Heart left ventricle (tissue), 16 donors: ENCODE measurements at regions of chr11 and their contacts with region 1.

Region 1: GRCh38 chr11:58513747-58514367 is 6.0 kb upstream of the OR5B21 start:
- DNase-seq: no peak
- ATAC-seq: peak in 3 of 4 donors; percentile 65 to 74 (median 73)
- H3K4me3 ChIP-seq: no peak overlapping the region
- H3K27ac ChIP-seq: no peak overlapping the region
- H3K4me1 ChIP-seq: peaks cover 0 to 3% (median 0%) of the 10 kb centered on the region in 12 donors
- H3K27me3 ChIP-seq: peaks cover 0 to 5% (median 0%) of the 10 kb centered on the region in 9 donors
- CTCF ChIP-seq: peak; percentile 42 to 76 (median 68)
- POLR2A ChIP-seq: no peak

Region 2: GRCh38 chr11:57567515-57568329 is 946.1 kb before region 1 on chr11 and contains the start of gene UBE2L6:
- intact Hi-C with region 1: loop called in 1 of 10 experiments (anchors 10 kb)
- DNase-seq: peak; percentile 56 to 90 (median 85)
- ATAC-seq: peak in 3 of 4 donors; percentile 80 to 87 (median 85)
- H3K4me3 ChIP-seq: peak within 1 kb of the TSS; percentile 57 to 96 (median 78)
- H3K27ac ChIP-seq: peak within 1 kb of the TSS; percentile 61 to 94 (median 84)
- H3K4me1 ChIP-seq: peaks cover 0 to 65% (median 14%) of the 10 kb centered on the region in 12 donors
- H3K27me3 ChIP-seq: no peaks in the 10 kb centered on the region
- CTCF ChIP-seq: peak in 7 of 12 donors; percentile 81 to 94 (median 86)
- POLR2A ChIP-seq: no peak
- total RNA-seq, gene UBE2L6: 11.2 to 175 (median 14.5) TPM

Region 3: DNA sequence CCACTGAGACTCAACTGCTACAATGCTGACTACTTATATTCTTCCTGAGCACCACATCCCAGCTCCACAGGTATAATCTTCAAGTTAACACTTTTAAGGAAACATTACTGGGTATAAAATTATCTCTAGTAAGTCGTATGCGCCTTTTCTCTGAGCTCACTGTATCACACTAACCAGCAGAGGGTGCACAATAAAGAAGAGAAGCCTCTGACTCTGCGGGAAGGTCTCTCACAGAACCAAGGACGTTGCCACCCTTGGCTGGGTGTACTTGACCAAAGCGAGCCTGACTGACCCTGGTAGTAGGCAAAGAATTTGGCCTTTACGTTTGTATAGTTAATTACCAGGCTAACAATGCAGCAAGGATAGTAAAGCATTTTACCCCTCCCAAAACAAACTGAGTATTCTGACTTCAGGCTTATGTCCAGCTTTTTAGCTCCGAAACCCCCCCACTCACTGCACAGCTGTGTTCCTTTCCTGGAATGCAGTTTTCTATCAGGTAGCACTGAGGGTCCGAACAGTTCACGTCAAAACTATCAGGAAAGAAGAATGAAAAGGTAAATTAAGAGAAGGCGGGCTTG is 762.1 kb before region 1 on chr11 and contains the start of gene BTBD18:
- intact Hi-C with region 1: loop called in 2 of 10 experiments (anchors 5 to 10 kb)
- DNase-seq: peak in 4 of 5 donors; percentile 36 to 45 (median 38)
- ATAC-seq: peak; percentile 76 to 89 (median 85)
- H3K4me3 ChIP-seq: no peak within 1 kb of the TSS
- H3K27ac ChIP-seq: peak within 1 kb of the TSS in 6 of 12 donors; percentile 17 to 56 (median 42)
- H3K4me1 ChIP-seq: peaks cover 0 to 9% (median 5%) of the 10 kb centered on the region in 12 donors
- H3K27me3 ChIP-seq: no peaks in the 10 kb centered on the region
- CTCF ChIP-seq: peak; percentile 39 to 64 (median 55)
- POLR2A ChIP-seq: no peak
- total RNA-seq, gene BTBD18: not detected

Region 4: DNA sequence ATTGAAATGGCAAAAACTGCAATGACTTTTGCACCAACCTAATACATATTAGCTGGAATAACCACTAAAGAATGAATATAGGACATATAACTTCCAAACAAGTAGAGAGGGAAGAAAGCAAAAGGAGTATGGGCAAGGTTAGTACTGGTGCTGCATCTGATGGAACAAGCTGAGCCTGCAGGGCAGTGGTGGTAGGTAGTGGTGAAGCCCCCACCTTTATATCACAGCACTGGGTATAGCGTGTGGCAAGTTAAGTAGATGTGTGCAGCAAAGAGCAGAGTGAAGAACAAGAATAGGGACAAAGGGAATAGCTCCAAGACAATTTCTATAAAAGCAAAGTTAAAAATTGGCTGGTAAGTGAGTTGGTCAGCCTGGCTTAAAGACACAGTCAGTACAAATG is 690.0 kb before region 1 on chr11:
- intact Hi-C with region 1: loop called in 3 of 10 experiments (anchors 10 kb)
- DNase-seq: no peak
- ATAC-seq: no peak
- H3K4me3 ChIP-seq: no peak overlapping the region
- H3K27ac ChIP-seq: no peak overlapping the region
- H3K4me1 ChIP-seq: peaks cover 0 to 10% (median 0%) of the 10 kb centered on the region in 12 donors
- H3K27me3 ChIP-seq: no peaks in the 10 kb centered on the region
- CTCF ChIP-seq: no peak
- POLR2A ChIP-seq: no peak

Region 5: DNA sequence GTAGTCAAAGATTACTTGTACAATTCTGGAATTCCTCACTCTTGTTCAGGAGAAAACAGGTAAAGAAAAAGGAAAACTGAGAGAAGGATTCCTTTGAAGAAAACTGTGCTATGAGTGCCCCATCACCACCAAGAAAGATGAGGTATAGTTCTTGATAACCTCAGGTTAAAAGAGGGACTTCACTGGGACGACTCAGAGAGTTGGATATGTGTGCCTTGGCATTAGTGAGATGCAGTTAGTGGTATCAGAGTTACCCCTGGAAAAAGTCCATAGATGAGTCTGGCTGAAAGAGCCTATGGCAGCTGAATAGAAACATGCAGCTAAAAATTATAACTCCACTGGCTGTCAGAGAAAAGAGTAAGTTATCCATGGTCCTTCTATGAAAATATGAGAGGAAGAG is 33.0 kb after region 1 on chr11:
- intact Hi-C with region 1: no loop called
- DNase-seq: no peak
- ATAC-seq: no peak
- H3K4me3 ChIP-seq: no peak overlapping the region
- H3K27ac ChIP-seq: no peak overlapping the region
- H3K4me1 ChIP-seq: peaks cover 0 to 6% (median 0%) of the 10 kb centered on the region in 12 donors
- H3K27me3 ChIP-seq: no peaks in the 10 kb centered on the region
- CTCF ChIP-seq: no peak
- POLR2A ChIP-seq: no peak

Region 6: DNA sequence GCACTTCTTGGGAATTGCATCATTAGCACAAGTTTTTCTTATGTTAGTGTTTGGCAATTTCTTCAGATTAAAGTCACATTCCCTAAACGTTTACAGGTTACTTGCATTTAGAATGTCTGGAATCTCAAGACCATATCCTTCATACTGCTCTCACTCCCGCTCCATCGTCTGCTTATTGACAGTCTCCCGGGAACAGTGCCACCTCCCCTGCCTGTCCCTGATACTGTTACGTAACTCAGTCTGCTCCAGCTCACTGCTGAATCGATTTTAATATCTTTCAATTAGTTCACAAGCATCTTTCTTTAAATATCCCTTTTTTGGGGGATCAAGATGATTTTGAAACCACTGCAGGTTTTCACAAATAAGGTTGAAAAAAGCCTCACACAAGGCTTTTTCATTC is 282.5 kb after region 1 on chr11:
- intact Hi-C with region 1: no loop called
- DNase-seq: no peak
- ATAC-seq: no peak
- H3K4me3 ChIP-seq: no peak overlapping the region
- H3K27ac ChIP-seq: no peak overlapping the region
- H3K4me1 ChIP-seq: no peaks in the 10 kb centered on the region
- H3K27me3 ChIP-seq: peaks cover 0 to 10% (median 0%) of the 10 kb centered on the region in 9 donors
- CTCF ChIP-seq: no peak
- POLR2A ChIP-seq: no peak